Posterior vena cava (tissue), 2 donors: ENCODE measurements at regions of chr19 and their contacts with region 1.

Region 1: DNA sequence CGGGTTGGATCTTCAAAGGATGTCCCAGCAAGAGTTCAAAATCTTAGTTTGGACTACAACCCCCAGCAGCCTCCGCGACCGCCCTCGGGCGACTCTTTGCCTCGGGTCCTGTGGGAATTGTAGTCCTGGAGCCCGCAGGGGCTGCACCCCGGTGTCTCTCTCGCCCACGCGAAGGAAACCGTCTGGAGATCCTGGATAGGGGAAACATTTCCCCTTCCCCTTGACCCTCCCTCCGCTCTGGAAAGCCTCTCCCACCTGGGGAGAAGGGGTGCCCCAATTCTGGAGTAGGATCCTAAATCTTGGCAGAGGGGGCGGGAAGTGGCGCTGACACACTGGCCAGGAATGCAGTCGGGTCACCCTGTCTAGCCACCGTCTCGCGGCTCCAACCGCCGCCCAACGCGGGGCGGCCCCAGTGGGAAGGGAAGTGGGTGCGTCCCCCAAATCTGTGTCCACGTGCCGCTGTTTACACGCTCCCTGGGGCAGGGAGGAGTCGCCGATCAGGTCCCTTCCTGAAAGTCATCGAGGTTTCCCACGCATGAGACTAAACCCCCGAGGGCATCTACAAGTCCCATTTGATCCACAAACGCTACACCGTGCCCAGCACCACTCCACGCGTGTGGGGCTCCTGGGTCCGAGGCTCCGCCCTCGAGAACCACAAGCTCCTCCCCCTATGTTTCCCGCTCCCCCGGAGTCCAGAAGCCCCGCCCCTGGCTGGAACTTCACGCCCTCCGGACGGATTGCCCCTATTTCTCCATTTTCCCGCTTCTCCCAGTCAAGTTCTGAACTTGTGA is 761 bp upstream of the PPP1R13L start:
- DNase-seq: peak; percentile 96

Region 2: GRCh38 chr19:45032421-45032820 is 373.2 kb before region 1 on chr19:
- intact Hi-C with region 1: loop called in 1 of 2 experiments (anchors 5 kb)
- DNase-seq: no peak